MCF 10A (cell line): ENCODE measurements at regions of chr4 and their contacts with region 1.

Region 1: DNA sequence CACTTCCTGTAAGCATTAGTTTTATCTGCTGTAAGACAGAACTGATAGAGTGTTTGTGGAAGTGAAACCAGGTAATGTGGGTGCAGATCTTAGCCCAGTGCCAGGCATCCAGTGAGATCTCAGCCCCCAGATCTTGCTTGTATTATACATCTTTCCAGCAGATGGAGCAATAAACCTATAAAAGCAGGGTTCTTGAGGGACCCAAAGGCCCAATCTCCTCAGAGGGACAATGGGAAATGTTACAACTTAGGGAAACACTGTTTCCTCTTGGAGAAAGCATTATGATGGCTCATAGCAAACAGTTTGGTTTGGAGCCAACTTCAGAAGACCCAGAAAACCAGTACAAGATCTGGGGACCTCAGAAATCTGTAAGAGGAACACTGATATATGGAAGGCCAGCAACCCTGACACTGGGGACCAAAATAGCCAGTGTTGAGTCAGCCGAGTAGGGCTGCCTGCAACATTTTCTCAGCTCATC is 206.3 kb downstream of the SLC7A11 start:
- DNase-seq: peak; percentile 72
- H3K4me3 Mint-ChIP-seq: no peak overlapping the region
- H3K27ac Mint-ChIP-seq: peak overlapping the region; percentile 35
- H3K4me1 Mint-ChIP-seq: peaks cover 19% of the 10 kb centered on the region
- H3K27me3 Mint-ChIP-seq: no peaks in the 10 kb centered on the region
- CTCF ChIP-seq: peak; percentile 69

Region 2: DNA sequence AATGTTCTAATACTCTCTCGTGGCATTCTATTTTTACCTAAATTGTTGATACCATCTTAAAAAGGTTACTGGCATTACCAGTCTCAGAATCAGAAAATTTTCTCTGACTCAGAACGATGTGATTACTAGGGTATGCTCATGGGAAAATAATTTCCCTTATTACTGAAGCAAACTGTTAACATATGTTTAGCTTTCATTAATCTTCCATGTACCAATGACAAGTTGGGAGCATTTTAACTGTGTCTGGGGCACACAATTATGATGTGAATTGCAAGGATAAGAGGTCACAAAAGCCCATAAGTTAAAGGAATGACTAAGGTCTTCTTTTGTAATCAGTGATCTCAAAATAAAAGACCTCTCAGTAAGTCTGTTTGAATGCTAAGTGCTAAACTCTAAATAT is 1758.1 kb before region 1 on chr4:
- CTCF ChIA-PET with region 1: no interaction called
- POLR2A ChIA-PET with region 1: no interaction called
- intact Hi-C with region 1: no loop called
- DNase-seq: no peak
- H3K4me3 Mint-ChIP-seq: no peak overlapping the region
- H3K27ac Mint-ChIP-seq: no peak overlapping the region
- H3K4me1 Mint-ChIP-seq: no peaks in the 10 kb centered on the region
- H3K27me3 Mint-ChIP-seq: no peaks in the 10 kb centered on the region
- CTCF ChIP-seq: no peak

Region 3: GRCh38 chr4:137124278-137124932 is 911.4 kb before region 1 on chr4:
- CTCF ChIA-PET with region 1: interaction called, 11 read pairs
- POLR2A ChIA-PET with region 1: interaction called, 6 read pairs
- intact Hi-C with region 1: loop called (anchors 2 kb)
- DNase-seq: peak; percentile 77
- H3K4me3 Mint-ChIP-seq: peak overlapping the region; percentile 72
- H3K27ac Mint-ChIP-seq: peak overlapping the region; percentile 41
- H3K4me1 Mint-ChIP-seq: peaks cover 5% of the 10 kb centered on the region
- H3K27me3 Mint-ChIP-seq: no peaks in the 10 kb centered on the region
- CTCF ChIP-seq: peak; percentile 60

Region 4: GRCh38 chr4:137610960-137611359 is 424.9 kb before region 1 on chr4:
- CTCF ChIA-PET with region 1: no interaction called
- POLR2A ChIA-PET with region 1: no interaction called
- intact Hi-C with region 1: no loop called
- DNase-seq: peak; percentile 24
- H3K4me3 Mint-ChIP-seq: no peak overlapping the region
- H3K27ac Mint-ChIP-seq: no peak overlapping the region
- H3K4me1 Mint-ChIP-seq: no peaks in the 10 kb centered on the region
- H3K27me3 Mint-ChIP-seq: no peaks in the 10 kb centered on the region
- CTCF ChIP-seq: peak; percentile 30

Region 5: GRCh38 chr4:138053641-138054301 is 18.0 kb after region 1 on chr4:
- CTCF ChIA-PET with region 1: interaction called, 34 read pairs
- POLR2A ChIA-PET with region 1: interaction called, 13 read pairs
- intact Hi-C with region 1: no loop called
- DNase-seq: peak; percentile 88
- H3K4me3 Mint-ChIP-seq: peak overlapping the region; percentile 50
- H3K27ac Mint-ChIP-seq: peak overlapping the region; percentile 16
- H3K4me1 Mint-ChIP-seq: peaks cover 18% of the 10 kb centered on the region
- H3K27me3 Mint-ChIP-seq: no peaks in the 10 kb centered on the region
- CTCF ChIP-seq: no peak

Region 6: DNA sequence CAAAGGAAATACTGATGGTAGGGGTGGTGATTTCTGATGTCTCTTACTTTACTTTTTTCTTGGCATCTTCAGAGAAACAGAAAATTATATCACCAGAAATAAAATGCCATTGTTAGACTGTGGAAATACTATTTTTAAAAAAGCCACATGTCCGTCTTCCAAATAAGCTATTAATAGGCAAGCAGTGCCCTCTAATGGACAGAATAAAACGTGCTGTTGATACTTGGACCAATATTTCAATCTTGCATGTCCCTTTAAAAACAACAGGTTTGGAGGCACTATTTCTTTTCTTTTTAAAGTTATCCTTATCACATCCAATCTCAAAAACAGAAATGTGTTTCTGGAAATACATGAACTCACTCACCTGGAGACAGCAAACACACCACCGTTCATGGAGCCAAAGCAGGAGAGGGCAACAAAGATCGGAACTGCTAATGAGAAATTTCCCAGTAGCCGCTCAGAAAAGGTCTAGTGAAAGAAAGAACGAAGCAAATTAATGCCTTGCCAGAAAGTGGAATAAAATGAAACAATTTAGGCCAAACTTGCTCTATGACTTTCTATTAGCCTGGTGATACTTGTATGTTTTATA is 147.1 kb after region 1 on chr4:
- CTCF ChIA-PET with region 1: interaction called, 29 read pairs
- POLR2A ChIA-PET with region 1: interaction called, 7 read pairs
- intact Hi-C with region 1: loop called (anchors 5 kb)
- DNase-seq: peak; percentile 54
- H3K4me3 Mint-ChIP-seq: no peak overlapping the region
- H3K27ac Mint-ChIP-seq: no peak overlapping the region
- H3K4me1 Mint-ChIP-seq: peaks cover 5% of the 10 kb centered on the region
- H3K27me3 Mint-ChIP-seq: no peaks in the 10 kb centered on the region
- CTCF ChIP-seq: peak; percentile 39

Region 7: GRCh38 chr4:138522366-138522765 is 486.5 kb after region 1 on chr4:
- CTCF ChIA-PET with region 1: no interaction called
- POLR2A ChIA-PET with region 1: no interaction called
- intact Hi-C with region 1: loop called (anchors 1 kb)
- DNase-seq: peak; percentile 45
- H3K4me3 Mint-ChIP-seq: no peak overlapping the region
- H3K27ac Mint-ChIP-seq: no peak overlapping the region
- H3K4me1 Mint-ChIP-seq: no peaks in the 10 kb centered on the region
- H3K27me3 Mint-ChIP-seq: no peaks in the 10 kb centered on the region
- CTCF ChIP-seq: peak; percentile 52

Region 8: DNA sequence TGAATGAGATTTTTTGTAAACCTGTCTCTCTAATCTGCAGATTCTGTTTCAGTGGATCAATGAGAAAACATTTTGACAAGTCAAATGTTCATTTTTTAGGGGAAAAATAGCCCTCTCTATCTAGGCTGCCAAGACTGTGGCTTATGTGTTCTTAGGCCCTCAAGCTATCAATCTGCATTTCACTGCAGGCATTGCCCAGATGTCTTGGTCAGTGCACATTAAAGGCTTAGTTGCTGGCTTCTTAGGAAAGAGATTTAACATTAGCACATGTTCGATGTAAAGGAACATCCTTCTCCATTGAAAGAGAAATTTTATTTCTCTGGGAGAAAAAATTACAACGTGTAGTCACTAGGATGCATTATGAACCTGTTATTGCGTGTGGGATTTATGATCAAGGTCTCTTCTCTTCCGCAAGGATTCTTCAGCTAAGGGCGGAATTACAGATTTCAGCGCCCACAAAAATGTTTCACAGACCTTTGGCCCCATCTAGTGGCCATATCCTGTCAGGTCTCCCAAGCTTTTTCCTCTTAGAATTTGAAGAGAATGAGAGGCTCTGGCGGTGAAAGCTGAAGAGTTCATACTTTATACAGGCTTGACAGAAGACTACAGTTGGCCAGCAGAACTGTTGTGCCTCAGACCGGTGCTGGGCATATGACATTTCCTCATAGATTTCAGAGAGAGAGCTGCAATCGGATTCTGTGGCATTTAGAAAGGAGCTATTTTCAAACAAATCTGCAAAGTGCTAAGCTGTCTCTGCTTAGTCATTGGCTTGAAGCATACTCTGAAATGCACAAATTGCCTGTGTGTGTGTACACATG is 835.1 kb after region 1 on chr4:
- CTCF ChIA-PET with region 1: interaction called, 9 read pairs
- POLR2A ChIA-PET with region 1: no interaction called
- intact Hi-C with region 1: loop called (anchors 2 kb)
- DNase-seq: peak; percentile 81
- H3K4me3 Mint-ChIP-seq: no peak overlapping the region
- H3K27ac Mint-ChIP-seq: no peak overlapping the region
- H3K4me1 Mint-ChIP-seq: peaks cover 11% of the 10 kb centered on the region
- H3K27me3 Mint-ChIP-seq: no peaks in the 10 kb centered on the region
- CTCF ChIP-seq: peak; percentile 78